Activated CD4-positive, alpha-beta T cell treated with anti-CD3 and anti-CD28 coated beads, Interleukin-2, amount 10 ng/mL, durations not matched to agents 7 days and 5 days (primary cell): ENCODE measurements at regions of chr17 and their contacts with region 1.

Region 1: DNA sequence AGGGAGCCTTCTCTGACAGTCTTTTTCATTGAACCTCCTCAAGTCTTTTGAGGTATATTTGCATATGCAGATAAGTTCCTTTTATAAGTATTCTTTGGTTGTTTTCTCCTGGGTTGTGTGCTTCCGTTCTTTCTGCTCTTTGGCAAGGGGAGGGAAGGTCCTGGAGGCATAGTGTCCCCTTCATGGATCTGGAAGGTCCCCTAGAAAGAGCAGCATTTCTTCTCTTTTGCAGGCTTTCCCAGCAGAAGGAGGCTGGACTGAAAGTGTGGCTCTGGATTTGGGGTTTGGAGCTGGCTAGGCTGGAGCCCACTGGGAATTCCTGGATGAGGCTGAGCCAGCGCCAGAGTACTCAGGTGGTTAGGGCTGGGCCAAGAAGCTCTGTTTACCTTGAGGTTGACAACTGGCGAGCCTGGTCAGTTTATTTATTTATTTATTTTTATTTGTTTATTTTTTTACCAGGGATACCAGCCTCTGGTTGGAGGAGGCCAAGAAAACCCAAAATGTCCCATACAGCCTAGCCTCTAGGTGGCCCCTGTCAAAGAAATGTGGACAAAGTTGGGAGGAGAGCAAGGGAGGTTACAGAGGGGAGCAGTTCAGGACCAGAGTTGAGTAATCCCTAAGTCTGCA is 5.4 kb upstream of the TOP2A start:
- DNase-seq: no peak
- H3K4me3 Mint-ChIP-seq: no peak overlapping the region
- H3K27ac Mint-ChIP-seq: no peak overlapping the region
- H3K4me1 Mint-ChIP-seq: peaks cover 51% of the 10 kb centered on the region
- H3K27me3 Mint-ChIP-seq: peaks cover 4% of the 10 kb centered on the region

Region 2: GRCh38 chr17:40548982-40549685 is 126.0 kb after region 1 on chr17:
- CTCF ChIA-PET with region 1: interaction called, 3 read pairs
- POLR2A ChIA-PET with region 1: interaction called, 15 read pairs
- DNase-seq: peak; percentile 18
- H3K4me3 Mint-ChIP-seq: no peak overlapping the region
- H3K27ac Mint-ChIP-seq: peak overlapping the region; percentile 88
- H3K4me1 Mint-ChIP-seq: peaks cover 91% of the 10 kb centered on the region
- H3K27me3 Mint-ChIP-seq: no peaks in the 10 kb centered on the region